ENCODE measurements at regions of chr17 and their contacts with region 1.

Region 1: DNA sequence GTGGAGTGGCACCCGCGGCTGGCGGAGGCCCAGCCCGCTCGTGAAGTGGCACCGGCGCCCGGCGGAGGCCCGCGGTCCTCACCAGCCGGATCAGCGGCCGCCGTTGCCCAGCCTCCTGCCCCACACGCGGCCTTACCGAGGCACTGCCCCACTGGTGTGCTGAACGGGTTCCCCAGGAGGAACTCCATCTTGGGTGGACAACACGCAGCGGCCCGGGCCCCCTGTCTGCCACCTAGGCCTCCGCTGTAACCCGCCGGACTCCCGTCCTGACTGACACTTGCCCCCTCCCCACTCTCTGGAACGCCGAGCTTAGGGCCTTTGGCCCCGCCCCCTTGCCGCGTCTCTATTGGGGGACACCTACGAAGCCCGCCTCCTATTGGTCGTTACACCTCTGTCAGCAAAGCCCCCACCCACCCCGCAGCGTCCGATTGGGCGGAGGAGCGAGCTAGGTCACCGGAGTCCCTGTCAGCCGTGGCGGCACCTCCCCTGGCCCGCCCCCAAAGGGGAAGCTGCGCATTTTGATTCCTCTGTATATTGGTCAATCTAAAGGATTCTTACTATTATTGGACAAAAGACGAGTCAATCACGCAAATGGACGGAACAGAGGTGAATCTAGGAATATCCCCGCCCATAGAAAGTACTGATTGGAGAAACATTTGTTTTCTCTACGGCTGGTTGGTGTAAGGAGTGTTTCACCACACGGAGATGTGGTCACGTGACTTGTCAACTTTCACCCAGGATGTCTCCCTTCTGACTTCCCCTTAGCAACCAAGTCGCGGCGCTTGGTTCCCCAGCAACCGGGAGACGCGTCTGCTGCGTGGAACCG is at the starts of genes DRC3 and TOM1L2:
- DNase-seq: peak; percentile 100
- H3K4me3 ChIP-seq: peak within 1 kb of the TSS; percentile 72 to 99 (median 95)
- H3K27ac ChIP-seq: peak within 1 kb of the TSS in 54 of 59 donors; percentile 40 to 92 (median 82)
- H3K27me3 ChIP-seq: no peaks in the 10 kb centered on the region
- CTCF ChIP-seq: peak in 39 of 56 donors; percentile 5 to 62 (median 36)
- total RNA-seq, gene DRC3: 1.4 to 14.1 (median 5.3) TPM
- total RNA-seq, gene TOM1L2: 162 to 252 (median 211) TPM

Region 2: GRCh38 chr17:17812211-17813057 is 159.9 kb before region 1 on chr17:
- intact Hi-C with region 1: loop called in 1 of 2 experiments (anchors 2 kb)
- DNase-seq: peak in 8 of 10 donors; percentile 62 to 80 (median 72)
- H3K4me3 ChIP-seq: peak overlapping the region in 2 of 59 donors; percentile 0 to 2
- H3K27ac ChIP-seq: peak overlapping the region in 58 of 59 donors; percentile 18 to 99 (median 82)
- H3K27me3 ChIP-seq: no peaks in the 10 kb centered on the region
- CTCF ChIP-seq: peak; percentile 97 to 100 (median 100)

Region 3: GRCh38 chr17:17823433-17824118 is 148.8 kb before region 1 on chr17:
- intact Hi-C with region 1: loop called in 1 of 2 experiments (anchors 5 kb)
- DNase-seq: peak; percentile 77 to 92 (median 86)
- H3K4me3 ChIP-seq: peak overlapping the region; percentile 52 to 90 (median 73)
- H3K27ac ChIP-seq: peak overlapping the region; percentile 63 to 99 (median 94)
- H3K27me3 ChIP-seq: no peaks in the 10 kb centered on the region
- CTCF ChIP-seq: no peak

Region 4: DNA sequence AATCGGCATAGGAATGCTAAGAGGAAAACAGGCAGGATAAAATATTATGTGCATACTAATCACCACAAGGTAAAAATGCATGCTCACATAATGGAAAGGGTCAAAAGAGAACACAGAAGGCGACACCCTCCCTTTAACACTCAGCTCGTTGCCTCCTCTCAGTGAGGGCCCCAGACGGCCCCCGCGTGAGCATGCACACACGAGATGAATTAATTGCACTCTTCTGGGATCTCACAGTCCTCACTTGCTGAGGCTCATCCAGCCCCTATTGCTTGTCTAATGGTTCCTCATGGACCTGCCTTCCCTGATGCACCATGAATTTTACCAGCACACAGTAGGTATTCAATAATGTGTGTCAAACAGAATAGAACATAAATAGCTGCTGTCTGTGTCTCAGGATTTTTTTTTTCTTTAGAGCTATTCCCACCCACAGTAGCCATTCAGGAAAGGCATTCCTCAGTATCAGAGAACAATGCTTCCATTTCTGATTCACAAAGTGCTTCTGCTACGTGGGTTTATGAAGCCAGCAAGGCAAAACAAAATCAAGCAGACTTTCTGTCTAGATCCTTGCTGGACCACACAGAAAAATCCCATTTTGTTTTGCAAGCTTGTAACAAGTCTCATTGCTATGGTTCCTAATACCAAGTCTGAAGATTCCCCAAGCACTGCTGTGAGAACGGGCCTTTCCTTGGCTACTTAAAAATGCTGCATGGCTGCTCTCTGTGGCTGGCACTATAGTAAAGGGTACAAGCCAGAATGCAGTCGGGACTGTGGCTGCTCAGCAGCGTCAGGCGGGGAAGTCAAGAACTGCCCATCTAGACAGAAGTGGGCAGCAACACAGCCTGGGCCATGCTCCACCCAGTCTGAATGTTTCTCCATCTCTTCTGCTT is 43.7 kb before region 1 on chr17:
- intact Hi-C with region 1: loop called in 1 of 2 experiments (anchors 2 kb)
- DNase-seq: peak in 8 of 10 donors; percentile 51 to 75 (median 62)
- H3K4me3 ChIP-seq: peak overlapping the region in 31 of 59 donors; percentile 1 to 45 (median 14)
- H3K27ac ChIP-seq: peak overlapping the region; percentile 12 to 97 (median 87)
- H3K27me3 ChIP-seq: no peaks in the 10 kb centered on the region
- CTCF ChIP-seq: peak in 7 of 56 donors; percentile 9 to 27 (median 11)

Region 5: GRCh38 chr17:18033442-18034099 is 61.2 kb after region 1 on chr17:
- intact Hi-C with region 1: loop called in 1 of 2 experiments (anchors 2 kb)
- DNase-seq: peak in 2 of 10 donors; percentile 50 to 55
- H3K4me3 ChIP-seq: no peak overlapping the region
- H3K27ac ChIP-seq: peak overlapping the region in 1 of 59 donors; percentile 16
- H3K27me3 ChIP-seq: no peaks in the 10 kb centered on the region
- CTCF ChIP-seq: peak; percentile 51 to 85 (median 69)

Region 6: GRCh38 chr17:18038861-18039534 is 66.7 kb after region 1 on chr17 and contains the starts of genes ATPAF2 and GID4:
- intact Hi-C with region 1: loop called (anchors 1 to 2 kb)
- DNase-seq: peak; percentile 99 to 100 (median 100)
- H3K4me3 ChIP-seq: peak within 1 kb of the TSS; percentile 67 to 100 (median 94)
- H3K27ac ChIP-seq: peak within 1 kb of the TSS in 57 of 59 donors; percentile 49 to 93 (median 84)
- H3K27me3 ChIP-seq: no peaks in the 10 kb centered on the region
- CTCF ChIP-seq: peak in 33 of 56 donors; percentile 13 to 56 (median 28)
- total RNA-seq, gene ATPAF2: 23.1 to 61.4 (median 36.3) TPM
- total RNA-seq, gene GID4: 10.2 to 20.5 (median 15.2) TPM

Region 7: DNA sequence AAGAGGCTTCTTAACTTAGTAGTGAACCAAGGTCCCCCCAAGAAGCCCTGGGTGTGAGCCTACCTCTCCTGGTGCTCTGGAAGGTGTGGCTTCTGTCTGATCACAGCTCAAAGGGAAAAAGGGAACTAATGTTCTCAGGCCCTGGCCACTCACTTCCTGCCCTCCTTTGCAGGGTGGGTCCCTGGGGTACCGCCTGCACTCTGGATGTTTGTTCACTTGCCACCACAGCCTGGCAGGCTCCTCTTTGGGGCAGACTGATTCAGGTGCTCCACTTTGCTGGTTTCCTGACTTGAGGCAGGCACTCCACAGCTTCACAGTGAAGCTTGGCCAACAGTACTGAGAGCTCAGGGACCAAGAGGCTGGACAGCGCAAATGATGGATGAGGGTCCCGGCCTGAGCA is 130.3 kb after region 1 on chr17:
- intact Hi-C with region 1: no loop called
- DNase-seq: no peak
- H3K4me3 ChIP-seq: no peak overlapping the region
- H3K27ac ChIP-seq: no peak overlapping the region
- H3K27me3 ChIP-seq: no peaks in the 10 kb centered on the region
- CTCF ChIP-seq: no peak

Measured in dorsolateral prefrontal cortex (tissue), 120 donors.